ENCODE measurements at regions of chr4 and their contacts with region 1.

Region 1: GRCh38 chr4:57163530-57164459 is 53.6 kb upstream of the IGFBP7 start:
- DNase-seq: peak; percentile 87
- H3K4me3 ChIP-seq: peak overlapping the region; percentile 34 to 63 (median 55)
- H3K27ac ChIP-seq: peak overlapping the region; percentile 66 to 79 (median 68)
- H3K4me1 ChIP-seq: peaks cover 0 to 11% (median 6%) of the 10 kb centered on the region in 4 donors
- H3K27me3 ChIP-seq: no peaks in the 10 kb centered on the region
- CTCF ChIP-seq: peak; percentile 67 to 98 (median 83)
- EP300 ChIP-seq: no peak
- POLR2A ChIP-seq: no peak

Region 2: DNA sequence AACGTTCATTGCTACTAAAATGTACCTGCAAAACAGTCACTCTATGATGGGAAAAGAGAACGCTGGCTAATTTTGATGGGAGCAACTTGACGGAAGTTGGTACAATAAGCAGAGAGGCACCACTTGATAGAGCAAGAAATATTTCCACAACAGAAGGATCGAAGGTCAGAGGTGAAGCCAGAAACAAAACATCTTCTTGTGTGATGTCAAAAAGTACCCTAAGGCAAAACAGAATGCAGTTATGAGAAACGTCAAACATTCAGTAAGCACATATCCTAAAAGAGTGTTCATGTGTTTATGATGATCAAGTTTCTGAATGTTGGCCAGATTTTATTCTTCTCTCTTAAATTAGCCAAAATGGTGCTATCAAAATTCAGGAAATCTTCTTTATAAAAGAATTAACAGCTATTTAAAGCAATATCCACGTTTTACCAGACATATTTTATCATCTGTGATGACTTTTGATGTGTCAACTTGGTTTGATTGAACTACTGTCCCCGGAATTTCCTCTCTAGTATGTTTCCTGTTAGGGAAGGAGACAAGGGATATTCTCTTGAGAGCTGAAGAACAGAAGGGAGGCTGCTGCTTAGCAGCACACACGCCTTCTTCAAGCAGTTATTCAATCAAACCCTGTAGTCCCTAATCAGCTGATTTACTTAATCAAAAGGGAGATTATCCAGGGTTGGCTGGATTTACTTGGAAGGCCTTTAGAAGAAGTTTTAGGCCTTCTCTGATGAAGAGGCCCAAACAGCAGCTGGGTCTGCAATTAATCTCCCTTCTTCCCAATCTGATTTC is 792.2 kb before region 1 on chr4:
- intact Hi-C with region 1: no loop called
- DNase-seq: no peak
- H3K4me3 ChIP-seq: no peak overlapping the region
- H3K27ac ChIP-seq: no peak overlapping the region
- H3K4me1 ChIP-seq: no peaks in the 10 kb centered on the region
- H3K27me3 ChIP-seq: no peaks in the 10 kb centered on the region
- CTCF ChIP-seq: no peak
- EP300 ChIP-seq: no peak
- POLR2A ChIP-seq: no peak

Region 3: GRCh38 chr4:57037982-57038604 is 125.7 kb before region 1 on chr4:
- intact Hi-C with region 1: loop called (anchors 2 kb)
- DNase-seq: peak; percentile 82
- H3K4me3 ChIP-seq: no peak overlapping the region
- H3K27ac ChIP-seq: peak overlapping the region in 3 of 4 donors; percentile 32 to 56 (median 43)
- H3K4me1 ChIP-seq: peaks cover 0 to 37% (median 15%) of the 10 kb centered on the region in 4 donors
- H3K27me3 ChIP-seq: no peaks in the 10 kb centered on the region
- CTCF ChIP-seq: peak; percentile 71 to 86 (median 80)
- EP300 ChIP-seq: no peak
- POLR2A ChIP-seq: no peak

Region 4: GRCh38 chr4:57303012-57303751 is 139.4 kb after region 1 on chr4:
- intact Hi-C with region 1: loop called (anchors 2 kb)
- DNase-seq: no peak
- H3K4me3 ChIP-seq: no peak overlapping the region
- H3K27ac ChIP-seq: no peak overlapping the region
- H3K4me1 ChIP-seq: no peaks in the 10 kb centered on the region
- H3K27me3 ChIP-seq: no peaks in the 10 kb centered on the region
- CTCF ChIP-seq: no peak
- EP300 ChIP-seq: no peak
- POLR2A ChIP-seq: no peak

Region 5: DNA sequence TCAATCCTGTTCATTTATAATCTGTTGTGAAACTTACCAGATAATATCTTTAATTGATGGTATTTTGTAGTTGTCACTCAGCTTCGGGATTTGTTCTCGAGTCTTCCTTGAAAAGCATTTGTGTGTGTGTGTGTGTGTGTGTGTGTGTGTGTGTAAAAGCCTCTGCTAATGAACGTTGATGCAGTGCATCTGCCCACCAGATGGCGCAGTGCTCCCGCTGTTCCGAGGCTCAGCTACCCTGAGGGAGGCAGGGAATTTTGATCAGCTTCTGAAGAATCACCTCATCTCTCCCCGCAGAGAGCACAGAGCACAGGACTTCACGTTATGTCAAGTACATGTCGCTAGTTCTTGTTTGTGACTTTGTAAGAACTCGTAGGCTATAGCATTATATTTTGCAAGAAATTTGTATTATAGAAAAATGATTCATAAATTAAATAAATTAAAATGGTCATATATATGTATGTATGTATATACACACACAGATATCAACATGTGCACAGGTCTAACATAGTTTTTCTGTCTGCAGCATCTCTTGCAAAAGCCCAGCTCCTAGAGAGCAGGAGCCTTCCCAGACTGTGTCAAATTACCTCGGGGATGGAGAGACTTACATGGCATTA is 263.1 kb after region 1 on chr4:
- intact Hi-C with region 1: loop called (anchors 5 kb)
- DNase-seq: no peak
- H3K4me3 ChIP-seq: no peak overlapping the region
- H3K27ac ChIP-seq: no peak overlapping the region
- H3K4me1 ChIP-seq: no peaks in the 10 kb centered on the region
- H3K27me3 ChIP-seq: no peaks in the 10 kb centered on the region
- CTCF ChIP-seq: peak; percentile 19 to 56 (median 53)
- EP300 ChIP-seq: no peak
- POLR2A ChIP-seq: no peak